Calu3 (cell line): ENCODE measurements at regions of chr11 and their contacts with region 1.

Region 1: GRCh38 chr11:112588252-112588694 is 327.6 kb upstream of the PLET1 start:
- DNase-seq: peak; percentile 59
- H3K4me3 Mint-ChIP-seq: no peak overlapping the region
- H3K27ac Mint-ChIP-seq: no peak overlapping the region
- H3K4me1 Mint-ChIP-seq: no peaks in the 10 kb centered on the region
- H3K27me3 Mint-ChIP-seq: no peaks in the 10 kb centered on the region
- CTCF ChIP-seq: no peak

Region 2: DNA sequence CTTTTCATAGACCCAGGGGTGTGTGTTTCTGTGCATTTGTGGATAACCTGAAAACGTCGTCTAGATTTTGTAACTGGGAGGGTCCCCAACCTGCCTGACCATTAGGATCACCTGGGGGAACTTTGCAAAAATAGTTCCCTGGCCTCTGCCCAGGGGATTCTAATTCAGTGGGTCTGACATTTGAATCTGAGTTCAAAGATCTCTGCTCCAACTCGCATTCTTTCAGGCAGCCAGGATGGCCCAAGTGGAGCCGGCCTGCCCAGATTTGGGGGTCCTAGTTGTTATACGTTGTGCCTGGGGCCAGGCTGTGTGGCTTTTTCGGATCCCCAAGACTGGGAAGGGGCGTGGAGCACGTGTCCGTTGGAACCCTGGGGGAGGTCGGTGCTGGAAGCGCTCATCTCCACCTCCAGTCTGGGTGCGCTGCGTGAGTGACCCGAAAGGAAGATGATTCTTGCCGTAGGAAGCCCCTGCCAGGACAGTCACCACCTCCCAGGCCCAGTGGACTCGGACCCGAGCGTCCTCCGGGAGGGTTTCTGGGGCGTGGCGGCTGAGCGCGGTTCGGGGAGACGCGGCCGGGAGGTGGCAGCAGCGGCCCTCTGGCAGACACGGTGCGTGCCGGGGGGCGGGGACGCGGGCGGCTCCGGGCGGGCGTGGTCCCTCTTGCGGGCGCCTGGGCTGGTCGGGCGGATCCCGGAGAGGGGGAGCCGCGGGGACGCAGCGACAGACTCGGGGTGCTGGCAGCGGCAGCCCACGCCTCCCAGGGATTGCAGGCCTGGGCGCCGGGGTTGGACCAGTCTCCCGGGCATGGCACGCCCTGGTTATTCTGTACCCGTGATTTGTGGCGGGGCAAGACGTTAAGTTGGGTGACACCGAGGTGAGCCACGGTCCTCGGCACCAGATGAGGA is 298.4 kb before region 1 on chr11:
- CTCF ChIA-PET with region 1: interaction called, 3 read pairs
- intact Hi-C with region 1: loop called (anchors 10 kb)
- DNase-seq: peak; percentile 84
- H3K4me3 Mint-ChIP-seq: peak overlapping the region; percentile 65
- H3K27ac Mint-ChIP-seq: no peak overlapping the region
- H3K4me1 Mint-ChIP-seq: no peaks in the 10 kb centered on the region
- H3K27me3 Mint-ChIP-seq: no peaks in the 10 kb centered on the region
- CTCF ChIP-seq: peak; percentile 67

Region 3: DNA sequence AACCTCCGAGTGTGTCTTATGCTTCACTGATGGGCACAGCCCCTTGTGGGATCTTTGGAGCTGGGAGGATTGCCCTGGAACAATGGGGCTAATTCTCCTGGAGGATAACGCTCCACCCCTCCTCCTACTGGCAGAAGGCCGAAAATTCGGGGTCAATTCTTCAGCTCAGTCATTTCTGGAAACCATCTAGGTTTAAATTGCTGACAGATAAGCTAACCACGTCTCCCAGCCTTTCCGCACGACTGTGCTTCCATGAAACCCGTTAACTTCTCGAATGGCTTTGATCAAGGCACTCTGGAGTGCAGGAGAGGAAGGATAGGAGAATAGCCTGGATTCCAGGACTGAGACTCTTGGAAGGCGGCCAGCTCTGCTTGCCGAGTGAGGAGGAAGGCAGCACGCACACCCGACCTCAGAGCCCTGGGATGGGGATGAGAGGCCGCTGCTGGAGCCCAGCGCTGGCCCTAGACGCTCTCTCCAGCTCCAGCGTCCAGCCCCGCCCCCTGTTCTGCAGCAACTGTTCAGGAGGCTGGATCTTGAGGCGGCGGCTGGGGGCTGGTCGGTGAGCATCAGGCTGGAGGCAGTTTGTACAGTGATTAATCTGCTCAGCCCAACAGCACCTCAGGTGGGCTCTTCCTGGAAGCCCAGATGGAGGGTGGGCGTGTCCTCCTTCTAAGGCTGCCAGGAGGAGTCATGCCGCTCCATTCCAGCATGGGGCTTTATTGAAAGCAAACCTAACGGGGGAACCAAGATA is 196.2 kb after region 1 on chr11:
- CTCF ChIA-PET with region 1: interaction called, 6 read pairs
- intact Hi-C with region 1: loop called (anchors 5 kb)
- DNase-seq: peak; percentile 56
- H3K4me3 Mint-ChIP-seq: peak overlapping the region; percentile 52
- H3K27ac Mint-ChIP-seq: no peak overlapping the region
- H3K4me1 Mint-ChIP-seq: peaks cover 28% of the 10 kb centered on the region
- H3K27me3 Mint-ChIP-seq: no peaks in the 10 kb centered on the region
- CTCF ChIP-seq: no peak

Region 4: DNA sequence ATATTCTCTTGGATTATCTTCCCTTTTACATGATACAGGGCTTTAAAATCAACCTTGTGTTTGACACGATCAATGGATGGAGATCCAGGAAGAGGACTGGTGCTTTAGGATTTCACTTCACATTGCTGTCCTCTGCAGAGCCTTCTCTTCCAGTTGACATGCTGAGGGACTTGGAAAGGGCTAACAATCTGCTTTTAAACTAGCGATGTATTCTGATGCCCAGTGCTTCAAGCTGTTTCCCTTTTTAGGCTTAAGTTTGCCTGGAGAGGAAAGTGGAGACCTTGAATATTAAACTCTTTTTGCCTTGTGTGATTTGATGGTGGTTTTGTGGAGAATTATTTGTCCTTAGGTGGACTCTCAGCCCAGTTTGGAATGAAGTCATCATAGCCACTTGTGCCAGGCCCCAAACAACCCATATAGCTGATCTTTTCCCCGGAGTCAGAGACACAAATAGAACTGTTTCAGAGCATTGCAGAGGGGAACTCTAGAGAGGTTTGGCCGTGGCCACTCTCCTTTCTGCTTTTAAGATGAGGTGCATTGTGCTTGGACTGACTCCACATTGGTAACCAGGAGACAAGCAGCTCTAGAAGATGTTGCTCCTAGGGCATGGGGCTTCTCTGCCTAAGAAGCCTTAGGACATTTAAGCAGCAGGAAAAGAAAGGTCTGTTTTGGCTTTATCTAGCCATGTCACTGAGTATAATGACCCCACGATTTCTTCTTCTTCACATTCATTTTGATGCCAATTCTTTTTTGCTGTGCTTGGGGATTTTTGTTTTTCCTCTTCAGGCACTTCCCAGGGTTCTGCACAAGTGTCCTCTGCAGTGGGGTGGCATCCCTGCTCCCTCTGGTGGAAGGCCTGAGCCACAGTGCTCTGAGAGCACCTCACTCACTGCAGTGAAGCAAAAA is 525.8 kb after region 1 on chr11:
- CTCF ChIA-PET with region 1: interaction called, 12 read pairs
- intact Hi-C with region 1: loop called (anchors 1 kb)
- DNase-seq: peak; percentile 46
- H3K4me3 Mint-ChIP-seq: no peak overlapping the region
- H3K27ac Mint-ChIP-seq: no peak overlapping the region
- H3K4me1 Mint-ChIP-seq: no peaks in the 10 kb centered on the region
- H3K27me3 Mint-ChIP-seq: peaks cover 24% of the 10 kb centered on the region
- CTCF ChIP-seq: peak; percentile 43